ENCODE measurements at regions of chr18 and their contacts with region 1.

Region 1: GRCh38 chr18:74476140-74476539 is 19.0 kb upstream of the DIPK1C start:
- DNase-seq: peak; percentile 83
- ATAC-seq: no peak

Region 2: GRCh38 chr18:73009691-73010090 is 1466.4 kb before region 1 on chr18:
- intact Hi-C with region 1: no loop called
- DNase-seq: no peak
- ATAC-seq: no peak

Region 3: DNA sequence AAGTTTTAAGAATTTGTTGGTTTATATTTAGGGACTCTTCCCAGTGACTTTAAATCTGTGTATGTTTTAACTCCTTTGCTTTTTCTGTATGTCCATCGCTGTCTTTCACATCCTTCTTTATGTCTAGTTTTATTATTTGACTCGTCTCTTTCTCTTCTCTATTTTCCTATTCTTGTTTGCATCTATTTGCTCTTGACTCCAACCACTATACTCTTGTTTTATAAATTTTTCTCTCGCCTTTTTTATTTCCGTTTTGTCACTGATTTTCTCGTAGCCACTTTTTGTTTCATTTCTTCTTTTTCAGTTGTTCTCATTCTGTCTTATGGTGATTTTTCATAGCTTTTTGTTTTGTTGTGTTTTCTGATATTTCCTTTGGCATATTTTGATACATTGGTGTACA is 1437.8 kb before region 1 on chr18:
- intact Hi-C with region 1: loop called (anchors 5 kb)
- DNase-seq: no peak
- ATAC-seq: no peak

Region 4: GRCh38 chr18:74378179-74378682 is 97.9 kb before region 1 on chr18:
- intact Hi-C with region 1: loop called (anchors 10 kb)
- DNase-seq: no peak
- ATAC-seq: peak; percentile 51

Region 5: DNA sequence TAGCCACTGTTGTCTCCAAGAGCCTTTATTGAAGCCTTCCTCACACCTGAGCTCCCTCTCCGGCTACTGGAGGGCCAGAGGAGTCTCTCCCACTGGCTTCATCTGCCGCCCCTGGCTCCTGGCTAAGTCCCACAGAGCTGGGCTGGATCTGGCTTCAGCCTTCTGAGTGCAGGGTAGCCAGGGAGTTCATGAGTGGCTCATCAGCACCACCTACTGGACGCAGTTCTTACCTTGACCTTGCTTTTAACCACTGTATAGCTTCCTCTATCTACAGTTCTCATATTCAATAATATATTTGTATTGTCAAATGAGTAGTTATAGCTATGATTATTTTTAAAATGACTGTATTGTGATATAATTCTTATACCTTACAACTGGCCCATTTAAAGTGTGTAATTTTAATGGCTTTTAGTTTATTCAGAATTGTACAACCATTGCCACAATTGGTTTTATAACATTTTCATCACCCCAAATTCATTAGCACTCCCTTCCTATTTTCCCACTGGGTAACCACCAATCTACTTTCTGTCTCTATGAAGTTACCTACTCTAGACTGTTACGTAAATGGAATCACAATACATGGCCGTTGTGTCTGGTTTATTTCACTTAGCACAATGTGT is 75.9 kb after region 1 on chr18:
- intact Hi-C with region 1: no loop called
- DNase-seq: peak; percentile 93
- ATAC-seq: peak; percentile 94

Region 6: GRCh38 chr18:75945268-75945933 is 1469.3 kb after region 1 on chr18:
- intact Hi-C with region 1: no loop called
- DNase-seq: no peak
- ATAC-seq: no peak